CD8-positive, alpha-beta memory T cell (primary cell): ENCODE measurements at regions of chr22 and their contacts with region 1.

Region 1: GRCh38 chr22:50030297-50031188 is 18.0 kb upstream of the IL17REL start:
- DNase-seq: peak; percentile 75 to 87 (median 77)
- H3K4me3 ChIP-seq: no peak overlapping the region
- H3K4me3 Mint-ChIP-seq: no peak overlapping the region
- H3K27ac ChIP-seq: no peak overlapping the region
- H3K27ac Mint-ChIP-seq: no peak overlapping the region
- H3K4me1 ChIP-seq: no peaks in the 10 kb centered on the region
- H3K4me1 Mint-ChIP-seq: peaks cover 8 to 12% (median 12%) of the 10 kb centered on the region in 3 donors
- H3K27me3 ChIP-seq: no peaks in the 10 kb centered on the region
- H3K27me3 Mint-ChIP-seq: peaks cover 5 to 17% of the 10 kb centered on the region in 2 donors

Region 2: GRCh38 chr22:49767355-49768062 is 263.0 kb before region 1 on chr22:
- CTCF ChIA-PET with region 1: interaction called, 30 read pairs
- POLR2A ChIA-PET with region 1: no interaction called
- DNase-seq: peak in 4 of 5 donors; percentile 21 to 53 (median 36)
- H3K4me3 ChIP-seq: no peak overlapping the region
- H3K4me3 Mint-ChIP-seq: no peak overlapping the region
- H3K27ac ChIP-seq: no peak overlapping the region
- H3K27ac Mint-ChIP-seq: peak overlapping the region in 3 of 8 donors; percentile 1 to 73 (median 7)
- H3K4me1 ChIP-seq: no peaks in the 10 kb centered on the region
- H3K4me1 Mint-ChIP-seq: peaks cover 0 to 2% (median 1%) of the 10 kb centered on the region in 3 donors
- H3K27me3 ChIP-seq: no peaks in the 10 kb centered on the region
- H3K27me3 Mint-ChIP-seq: no peaks in the 10 kb centered on the region

Region 3: DNA sequence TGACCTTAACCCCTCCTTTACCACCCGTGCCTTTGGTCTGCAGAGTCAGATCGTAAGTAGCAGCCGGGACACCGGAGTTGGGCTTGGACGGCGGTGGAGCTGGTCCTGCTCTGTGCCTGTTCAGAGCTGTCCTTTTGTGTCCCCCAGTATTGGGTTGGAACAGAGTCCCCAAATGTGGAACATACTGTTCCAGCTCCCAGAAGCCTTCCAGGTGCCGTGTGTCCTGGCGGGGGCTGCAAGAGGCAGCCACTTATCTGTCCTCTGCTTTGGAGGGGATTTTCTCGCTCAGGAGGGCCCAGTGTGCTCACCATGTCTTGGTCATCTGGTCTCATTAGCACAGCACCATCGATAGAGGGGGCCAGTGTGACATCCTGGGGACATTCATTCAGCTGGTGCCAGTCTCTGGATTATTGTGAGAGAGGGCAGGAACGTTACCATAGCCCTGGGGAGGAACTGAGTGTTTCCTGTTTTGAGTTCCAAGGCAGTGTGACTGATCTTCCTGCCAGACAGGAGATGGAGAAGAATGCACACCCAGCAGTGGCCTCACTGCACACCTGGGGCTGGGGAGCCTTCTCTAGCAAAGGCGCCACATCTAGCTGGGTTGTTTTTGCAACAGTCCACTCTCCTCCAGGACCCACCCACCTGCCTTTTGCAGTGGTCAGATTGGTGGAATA is 99.7 kb before region 1 on chr22:
- CTCF ChIA-PET with region 1: interaction called, 40 read pairs
- POLR2A ChIA-PET with region 1: no interaction called
- DNase-seq: peak in 1 of 5 donors; percentile 29
- H3K4me3 ChIP-seq: no peak overlapping the region
- H3K4me3 Mint-ChIP-seq: peak overlapping the region in 4 of 7 donors; percentile 3 to 43 (median 10)
- H3K27ac ChIP-seq: no peak overlapping the region
- H3K27ac Mint-ChIP-seq: peak overlapping the region; percentile 29 to 88 (median 70)
- H3K4me1 ChIP-seq: peaks cover 32% of the 10 kb centered on the region
- H3K4me1 Mint-ChIP-seq: peaks cover 19 to 39% (median 25%) of the 10 kb centered on the region in 3 donors
- H3K27me3 ChIP-seq: no peaks in the 10 kb centered on the region
- H3K27me3 Mint-ChIP-seq: no peaks in the 10 kb centered on the region

Region 4: GRCh38 chr22:49992921-49993648 is 37.5 kb before region 1 on chr22:
- CTCF ChIA-PET with region 1: interaction called, 49 read pairs
- POLR2A ChIA-PET with region 1: no interaction called
- DNase-seq: peak; percentile 44 to 80 (median 50)
- H3K4me3 ChIP-seq: no peak overlapping the region
- H3K4me3 Mint-ChIP-seq: peak overlapping the region in 1 of 7 donors; percentile 73
- H3K27ac ChIP-seq: no peak overlapping the region
- H3K27ac Mint-ChIP-seq: peak overlapping the region in 3 of 8 donors; percentile 43 to 63 (median 47)
- H3K4me1 ChIP-seq: no peaks in the 10 kb centered on the region
- H3K4me1 Mint-ChIP-seq: peaks cover 3 to 6% (median 6%) of the 10 kb centered on the region in 3 donors
- H3K27me3 ChIP-seq: no peaks in the 10 kb centered on the region
- H3K27me3 Mint-ChIP-seq: peaks cover 6 to 7% of the 10 kb centered on the region in 2 donors